Naive thymus-derived CD8-positive, alpha-beta T cell (primary cell): ENCODE measurements at regions of chr17 and their contacts with region 1.

Region 1: DNA sequence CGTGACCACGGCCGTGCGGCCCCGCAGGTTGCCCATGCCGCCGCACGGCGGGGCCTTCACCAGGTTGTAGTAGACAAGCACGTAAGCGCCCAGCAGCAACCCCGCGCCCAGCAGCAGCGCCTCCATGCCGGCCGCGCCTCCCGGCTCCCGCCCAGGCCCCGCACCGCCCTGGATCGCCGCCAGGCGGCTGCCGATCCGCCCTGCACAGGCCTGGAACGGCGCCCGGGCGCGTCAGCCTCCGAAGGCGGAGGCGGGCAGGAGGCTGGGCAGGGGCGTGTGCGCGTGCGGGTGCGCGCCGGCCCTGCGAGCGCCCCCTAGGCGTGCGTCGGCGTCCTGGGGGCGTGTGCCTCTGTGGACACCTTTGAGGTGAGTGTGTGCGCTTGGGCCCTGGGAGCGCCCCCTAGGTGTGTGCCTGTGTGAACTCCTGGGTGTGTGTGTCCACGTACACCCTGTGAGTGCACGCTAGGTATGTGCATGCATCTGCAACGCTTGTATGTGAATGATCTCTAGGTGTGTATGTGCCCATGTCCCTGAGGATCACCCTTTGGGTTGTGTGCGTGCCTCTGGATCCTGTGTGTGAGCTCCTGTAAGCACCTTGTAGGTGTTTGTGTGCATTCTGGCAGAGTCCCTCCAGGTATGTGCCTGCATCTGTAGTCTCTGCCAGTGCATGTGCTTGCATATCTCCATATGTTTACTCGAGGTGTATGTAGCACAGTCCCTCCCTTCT is at the start of gene DHRS13:
- DNase-seq: peak; percentile 90 to 99 (median 96)
- ATAC-seq: peak; percentile 89 to 90
- H3K4me3 Mint-ChIP-seq: peak within 1 kb of the TSS; percentile 82 to 95 (median 90)
- H3K27ac Mint-ChIP-seq: peak within 1 kb of the TSS; percentile 83 to 97 (median 90)
- H3K4me1 Mint-ChIP-seq: peaks cover 23 to 41% (median 39%) of the 10 kb centered on the region in 4 donors
- H3K27me3 Mint-ChIP-seq: no peaks in the 10 kb centered on the region
- polyA plus RNA-seq, gene DHRS13: 17.1 to 22.8 (median 19.4) TPM

Region 2: GRCh38 chr17:28842282-28843012 is 60.5 kb before region 1 on chr17 and contains the start of gene FAM222B:
- POLR2A ChIA-PET with region 1: interaction called, 18 read pairs
- DNase-seq: peak; percentile 77 to 90 (median 84)
- ATAC-seq: peak; percentile 97 to 98
- H3K4me3 Mint-ChIP-seq: peak within 1 kb of the TSS; percentile 94 to 100 (median 98)
- H3K27ac Mint-ChIP-seq: peak within 1 kb of the TSS; percentile 87 to 98 (median 96)
- H3K4me1 Mint-ChIP-seq: peaks cover 10 to 29% (median 24%) of the 10 kb centered on the region in 4 donors
- H3K27me3 Mint-ChIP-seq: peaks cover 0 to 2% (median 0%) of the 10 kb centered on the region in 5 donors
- polyA plus RNA-seq, gene FAM222B: 7.5 to 20.0 (median 9.2) TPM

Region 3: DNA sequence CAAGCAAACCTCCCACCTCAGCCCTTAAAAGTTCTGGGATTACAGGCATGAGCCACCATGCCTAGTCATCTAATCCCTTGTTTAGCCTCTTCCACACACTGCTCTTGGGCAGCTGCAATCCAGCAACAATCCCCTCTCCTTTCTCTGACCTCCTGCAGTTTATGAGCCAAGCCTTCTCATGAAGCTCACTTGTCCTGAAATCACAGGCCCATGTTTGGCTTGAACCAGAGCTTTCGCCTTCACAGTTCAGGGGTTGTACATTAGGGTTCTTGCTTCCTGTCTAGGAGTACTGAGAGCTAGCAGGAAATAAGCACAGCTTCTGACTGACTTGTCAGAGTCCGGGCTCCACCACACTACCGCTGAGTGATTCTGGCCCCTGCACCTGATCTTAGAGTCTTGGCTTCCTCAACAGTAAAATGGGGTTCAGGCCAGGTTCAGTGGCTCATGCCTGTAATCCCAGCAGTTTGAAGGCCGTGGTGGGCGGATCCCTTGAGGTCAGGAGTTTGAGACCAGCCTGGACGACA is 31.9 kb before region 1 on chr17:
- POLR2A ChIA-PET with region 1: interaction called, 36 read pairs
- DNase-seq: peak in 7 of 10 donors; percentile 3 to 58 (median 33)
- ATAC-seq: peak; percentile 100
- H3K4me3 Mint-ChIP-seq: peak overlapping the region in 9 of 10 donors; percentile 48 to 80 (median 61)
- H3K27ac Mint-ChIP-seq: peak overlapping the region; percentile 86 to 100 (median 96)
- H3K4me1 Mint-ChIP-seq: peaks cover 7 to 18% (median 13%) of the 10 kb centered on the region in 4 donors
- H3K27me3 Mint-ChIP-seq: no peaks in the 10 kb centered on the region

Region 4: DNA sequence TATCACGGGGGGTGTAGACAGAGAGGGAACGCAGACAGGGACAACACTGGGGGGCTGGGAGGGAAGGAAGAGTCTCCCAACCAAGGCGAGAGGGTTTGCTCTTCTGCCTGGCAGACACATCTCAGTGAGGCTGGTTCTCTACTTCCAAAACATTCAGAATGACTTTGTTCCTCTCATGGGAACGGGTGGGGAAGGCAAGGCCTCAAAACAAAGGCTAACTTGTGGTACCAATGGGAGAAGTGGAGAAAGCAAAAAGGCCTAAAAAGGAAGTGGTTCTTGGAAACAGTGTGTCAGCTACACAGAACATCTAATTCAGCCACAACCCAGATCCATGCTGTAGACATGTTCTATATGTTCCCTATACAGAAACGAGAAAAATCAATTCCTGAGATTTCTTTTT is 13.0 kb before region 1 on chr17:
- POLR2A ChIA-PET with region 1: interaction called, 27 read pairs
- DNase-seq: no peak
- ATAC-seq: no peak
- H3K4me3 Mint-ChIP-seq: peak overlapping the region in 2 of 10 donors; percentile 10 to 14
- H3K27ac Mint-ChIP-seq: peak overlapping the region in 9 of 10 donors; percentile 37 to 98 (median 77)
- H3K4me1 Mint-ChIP-seq: peaks cover 27 to 69% (median 56%) of the 10 kb centered on the region in 4 donors
- H3K27me3 Mint-ChIP-seq: no peaks in the 10 kb centered on the region

Region 5: DNA sequence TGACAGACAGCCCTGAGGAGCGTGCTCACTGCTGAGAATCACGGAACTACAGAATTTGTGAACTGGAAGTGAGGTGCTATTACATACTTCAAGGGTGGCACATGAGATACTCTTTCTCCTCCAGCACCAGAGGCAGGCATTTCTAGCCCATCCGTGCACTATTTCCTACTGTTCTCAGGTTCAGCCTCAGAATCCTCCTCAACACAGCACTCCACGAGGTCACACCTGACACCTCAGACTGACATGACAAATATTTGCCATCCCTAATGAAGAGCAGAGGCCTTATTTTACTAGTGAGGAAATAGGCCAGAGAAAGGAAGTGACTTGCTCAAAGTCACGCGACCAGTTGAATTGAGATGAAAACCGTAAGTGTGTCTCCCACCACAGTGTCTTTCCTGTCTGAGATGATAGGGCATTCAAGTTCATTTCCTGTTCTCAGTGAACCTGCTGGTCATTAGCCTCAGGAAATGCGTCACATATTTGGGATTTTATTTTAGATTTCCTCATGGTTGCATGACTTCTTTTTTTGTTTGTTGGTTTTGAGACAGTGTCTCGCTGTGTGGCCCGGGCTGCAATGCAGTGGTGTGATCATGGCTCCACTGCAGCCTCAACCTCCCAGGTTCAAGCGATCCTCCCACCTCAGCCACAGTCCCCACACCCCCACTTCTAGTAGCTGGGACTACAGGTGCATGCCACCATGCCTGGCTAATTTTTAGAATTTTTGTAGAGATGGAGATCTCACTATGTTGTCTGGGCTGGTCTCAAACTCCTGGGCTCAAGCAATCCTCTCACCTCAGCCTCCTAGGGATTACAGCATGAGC is 79.4 kb after region 1 on chr17:
- POLR2A ChIA-PET with region 1: no interaction called
- DNase-seq: peak in 9 of 10 donors; percentile 35 to 82 (median 68)
- ATAC-seq: peak; percentile 89 to 94
- H3K4me3 Mint-ChIP-seq: peak overlapping the region in 9 of 10 donors; percentile 53 to 83 (median 68)
- H3K27ac Mint-ChIP-seq: peak overlapping the region; percentile 93 to 99 (median 98)
- H3K4me1 Mint-ChIP-seq: peaks cover 18 to 32% (median 28%) of the 10 kb centered on the region in 4 donors
- H3K27me3 Mint-ChIP-seq: peaks cover 0 to 5% (median 0%) of the 10 kb centered on the region in 5 donors